ENCODE measurements at regions of chr15 and their contacts with region 1.

Region 1: DNA sequence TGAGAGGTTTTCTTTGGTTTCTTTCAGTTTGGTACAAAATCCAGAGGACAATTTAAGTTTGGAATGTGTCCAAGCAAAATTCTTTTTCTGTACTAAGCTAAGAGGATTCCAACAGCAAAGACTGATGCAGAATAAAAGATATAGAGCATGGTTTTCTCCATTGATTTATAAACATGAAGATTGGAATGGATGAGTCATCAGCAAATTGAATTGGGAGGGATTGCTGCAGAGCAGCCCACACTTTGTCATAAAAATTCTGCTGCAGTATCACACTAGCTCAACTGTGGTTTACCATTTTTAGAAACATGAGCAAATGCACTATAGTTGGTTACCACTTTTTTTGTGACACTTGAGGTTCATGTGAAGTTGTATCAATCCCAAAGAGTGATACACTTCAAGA is 16.1 kb upstream of the LARP6 start:
- DNase-seq: no peak
- ATAC-seq: peak in 2 of 4 donors; percentile 42 to 45
- H3K4me3 ChIP-seq: no peak overlapping the region
- H3K27ac ChIP-seq: peak overlapping the region in 4 of 12 donors; percentile 7 to 37 (median 14)
- H3K4me1 ChIP-seq: peaks cover 0 to 39% (median 24%) of the 10 kb centered on the region in 12 donors
- H3K27me3 ChIP-seq: no peaks in the 10 kb centered on the region
- CTCF ChIP-seq: no peak
- POLR2A ChIP-seq: no peak

Region 2: GRCh38 chr15:70833897-70834765 is 35.9 kb before region 1 on chr15:
- intact Hi-C with region 1: loop called in 2 of 10 experiments (anchors 5 kb)
- DNase-seq: no peak
- ATAC-seq: no peak
- H3K4me3 ChIP-seq: no peak overlapping the region
- H3K27ac ChIP-seq: peak overlapping the region in 11 of 12 donors; percentile 14 to 92 (median 46)
- H3K4me1 ChIP-seq: peaks cover 0 to 58% (median 17%) of the 10 kb centered on the region in 12 donors
- H3K27me3 ChIP-seq: no peaks in the 10 kb centered on the region
- CTCF ChIP-seq: no peak
- POLR2A ChIP-seq: no peak

Measured in heart left ventricle (tissue), 16 donors.